Thyroid gland (tissue), 4 donors: ENCODE measurements at regions of chr19 and their contacts with region 1.

Region 1: DNA sequence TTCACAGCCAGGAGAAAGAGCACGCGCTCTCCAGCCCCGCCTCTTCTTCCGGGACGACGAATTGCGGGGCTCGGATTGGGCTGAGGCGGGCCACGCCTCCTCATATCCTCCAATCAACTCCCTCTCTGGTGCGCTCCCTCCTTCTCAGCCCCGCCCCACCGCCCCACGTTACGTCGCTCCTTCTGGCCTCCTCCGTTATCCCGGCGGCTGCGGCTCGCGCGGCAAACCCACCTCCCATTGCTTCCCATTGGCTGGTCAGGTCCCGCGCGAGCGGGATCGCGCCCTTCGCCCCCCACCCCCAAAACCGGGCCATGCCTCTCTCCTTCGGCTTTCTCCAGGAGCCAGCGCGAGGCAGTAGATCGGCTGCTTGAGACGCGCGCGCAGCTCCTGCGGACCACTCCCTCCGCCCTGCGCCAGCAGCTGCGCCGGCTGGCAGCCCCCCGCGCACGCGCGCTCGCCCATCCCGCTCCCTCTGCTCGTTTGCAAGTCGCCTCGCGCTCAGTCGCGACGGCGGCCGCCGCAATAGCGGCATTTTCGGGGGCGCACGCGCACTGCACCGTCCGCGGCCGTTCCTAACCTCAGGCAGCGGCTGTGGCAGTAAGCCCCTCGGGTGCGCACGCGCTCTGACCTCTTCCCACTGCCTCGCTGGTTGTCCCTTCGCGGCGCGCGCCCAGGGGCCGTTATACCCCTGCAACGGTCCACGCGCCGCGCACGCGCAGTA is 512 bp upstream of the ARHGAP35 start:
- DNase-seq: peak; percentile 99
- H3K4me3 ChIP-seq: peak overlapping the region; percentile 25 to 81 (median 79)
- H3K27ac ChIP-seq: peak overlapping the region; percentile 75 to 98 (median 94)
- H3K4me1 ChIP-seq: peaks cover 40 to 45% of the 10 kb centered on the region in 2 donors
- H3K27me3 ChIP-seq: no peaks in the 10 kb centered on the region
- CTCF ChIP-seq: peak in 1 of 6 experiments; percentile 9
- POLR2A ChIP-seq: peak in 1 of 2 donors; percentile 74

Region 2: GRCh38 chr19:46990991-46991676 is 130.8 kb after region 1 on chr19:
- intact Hi-C with region 1: loop called (anchors 2 kb)
- DNase-seq: peak; percentile 80 to 82
- H3K4me3 ChIP-seq: no peak overlapping the region
- H3K27ac ChIP-seq: peak overlapping the region in 2 of 3 donors; percentile 58 to 61
- H3K4me1 ChIP-seq: peaks cover 6 to 15% of the 10 kb centered on the region in 2 donors
- H3K27me3 ChIP-seq: no peaks in the 10 kb centered on the region
- CTCF ChIP-seq: peak; percentile 34 to 90 (median 80)
- POLR2A ChIP-seq: no peak

Region 3: GRCh38 chr19:47112997-47113849 is 252.9 kb after region 1 on chr19 and contains the start of gene ZC3H4:
- intact Hi-C with region 1: loop called (anchors 5 kb)
- DNase-seq: peak; percentile 99
- H3K4me3 ChIP-seq: peak within 1 kb of the TSS; percentile 31 to 86 (median 69)
- H3K27ac ChIP-seq: peak within 1 kb of the TSS; percentile 99 to 100 (median 100)
- H3K4me1 ChIP-seq: peaks cover 18 to 25% of the 10 kb centered on the region in 2 donors
- H3K27me3 ChIP-seq: no peaks in the 10 kb centered on the region
- CTCF ChIP-seq: no peak
- POLR2A ChIP-seq: peak; percentile 70 to 90
- total RNA-seq, gene ZC3H4: 19.1 to 36.7 (median 31.3) TPM